H1 (cell line): ENCODE measurements at regions of chr1 and their contacts with region 1.

Region 1: DNA sequence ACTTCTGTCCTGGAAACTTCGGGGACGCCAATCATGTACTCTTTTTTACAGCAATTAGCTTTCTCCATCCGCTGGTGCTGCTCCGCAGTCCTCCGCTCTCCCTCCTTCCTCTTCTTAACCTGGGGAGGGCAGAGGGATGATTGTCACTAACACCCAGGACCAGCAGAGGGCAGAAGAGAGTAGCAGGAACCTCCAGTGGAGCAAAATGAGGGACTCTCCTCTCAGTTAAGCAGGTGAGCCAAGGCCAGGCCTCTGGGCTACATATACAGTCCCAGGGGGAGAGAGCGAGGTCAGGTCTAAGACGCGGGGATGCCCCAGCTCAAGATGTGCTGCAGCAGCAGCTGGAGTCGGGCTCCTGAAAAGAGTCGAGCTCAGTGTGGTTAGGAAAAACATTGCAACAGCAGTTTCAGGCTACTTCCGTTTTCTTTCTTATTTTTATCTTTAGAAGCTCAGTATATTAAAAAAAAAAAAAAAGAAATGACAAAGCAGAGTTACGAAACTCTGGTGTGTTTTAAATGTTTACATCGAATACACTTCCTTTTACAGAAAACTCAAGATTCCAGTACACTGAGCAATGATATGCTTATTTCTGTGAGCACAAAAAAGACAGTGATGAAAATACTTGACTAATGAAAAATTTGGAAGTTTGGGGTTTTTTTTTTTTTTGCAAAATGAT is 25.7 kb upstream of the NLRP3 start:
- DNase-seq: peak; percentile 63 to 93
- H3K4me3 ChIP-seq: no peak overlapping the region
- H3K27ac ChIP-seq: no peak overlapping the region
- H3K4me1 ChIP-seq: peaks cover 0 to 7% (median 6%) of the 10 kb centered on the region in 4 experiments
- H3K27me3 ChIP-seq: peaks cover 0 to 7% (median 2%) of the 10 kb centered on the region in 4 experiments; a peak in 3 of 7 replicates
- CTCF ChIP-seq: peak; percentile 74 to 94 (median 87)
- EP300 ChIP-seq: 0 out of 3 replicates have a peak, but pooled peaks of 1 of the 2 experiments have one; percentile 66
- POLR2A ChIP-seq: no peak
- RAD21 ChIP-seq: peak; percentile 67 to 74; a peak in 3 of 4 replicates

Region 2: GRCh38 chr1:247373721-247374141 is 16.5 kb before region 1 on chr1:
- CTCF ChIA-PET with region 1: interaction called, 33 read pairs
- POLR2A ChIA-PET with region 1: interaction called, 10 read pairs
- DNase-seq: peak in 1 of 2 experiments; percentile 89
- H3K4me3 ChIP-seq: peak overlapping the region in 1 of 4 experiments; percentile 43; a peak in 1 of 8 replicates
- H3K27ac ChIP-seq: no peak overlapping the region
- H3K4me1 ChIP-seq: peaks cover 13 to 35% (median 23%) of the 10 kb centered on the region in 4 experiments; a peak in 6 of 7 replicates
- H3K27me3 ChIP-seq: no peaks in the 10 kb centered on the region
- CTCF ChIP-seq: peak; percentile 56 to 74 (median 63)
- EP300 ChIP-seq: 0 out of 3 replicates have a peak, but pooled peaks of 1 of the 2 experiments have one; percentile 7
- POLR2A ChIP-seq: no peak
- RAD21 ChIP-seq: peak; percentile 29 to 51

Region 3: GRCh38 chr1:247401310-247402119 is 11.3 kb after region 1 on chr1:
- CTCF ChIA-PET with region 1: interaction called, 43 read pairs
- POLR2A ChIA-PET with region 1: no interaction called
- DNase-seq: no peak
- H3K4me3 ChIP-seq: no peak overlapping the region
- H3K27ac ChIP-seq: no peak overlapping the region
- H3K4me1 ChIP-seq: no peaks in the 10 kb centered on the region
- H3K27me3 ChIP-seq: no peaks in the 10 kb centered on the region
- CTCF ChIP-seq: no peak
- EP300 ChIP-seq: no peak
- POLR2A ChIP-seq: no peak
- RAD21 ChIP-seq: no peak

Region 4: DNA sequence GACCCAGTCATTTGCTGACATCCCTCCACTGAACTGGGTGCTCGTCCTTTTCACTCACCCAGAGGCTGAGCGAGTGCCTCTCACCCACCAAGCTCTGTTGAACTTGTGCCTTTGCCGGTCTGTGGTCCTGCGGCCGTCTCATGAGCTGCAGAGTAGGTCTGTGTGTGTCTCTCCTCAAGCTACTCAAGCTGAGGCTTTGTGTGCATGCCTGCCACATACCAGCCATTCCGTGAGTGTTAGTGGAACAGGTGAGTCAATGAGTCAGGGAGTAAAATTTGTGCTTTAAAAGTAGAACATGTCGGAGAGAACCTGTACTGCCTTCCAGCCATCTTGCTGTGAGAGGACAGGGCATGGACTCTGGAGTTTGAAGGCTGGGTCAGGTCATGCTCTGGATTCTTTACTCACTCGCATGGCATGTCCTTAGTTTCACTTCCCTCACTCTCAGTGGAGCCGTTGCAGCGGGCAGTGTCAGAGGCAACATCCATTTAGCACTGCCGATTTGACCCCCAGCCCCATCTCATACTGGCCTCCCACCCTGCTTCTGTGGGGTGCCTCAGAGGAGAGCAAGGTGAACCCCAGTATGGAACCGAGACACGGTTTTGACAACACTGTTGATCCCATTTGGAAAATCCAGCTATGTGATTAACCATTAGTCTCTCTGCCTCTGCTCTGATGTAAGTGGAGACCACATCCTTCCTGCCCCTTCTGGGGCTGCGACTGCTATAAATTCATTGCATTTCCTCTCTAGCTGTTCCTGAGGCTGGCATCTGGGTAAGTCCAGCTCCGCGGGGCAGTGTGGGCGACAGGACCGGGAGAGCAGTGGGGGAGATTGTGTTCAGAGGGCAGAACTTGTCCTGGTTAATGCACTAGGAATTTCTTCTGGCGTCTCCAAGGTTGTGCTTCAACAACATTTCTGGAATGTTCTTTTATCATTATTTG is 25.4 kb after region 1 on chr1 and contains the start of gene NLRP3:
- CTCF ChIA-PET with region 1: interaction called, 12 read pairs
- POLR2A ChIA-PET with region 1: no interaction called
- DNase-seq: no peak
- H3K4me3 ChIP-seq: no peak within 1 kb of the TSS
- H3K27ac ChIP-seq: no peak within 1 kb of the TSS
- H3K4me1 ChIP-seq: no peaks in the 10 kb centered on the region
- H3K27me3 ChIP-seq: no peaks in the 10 kb centered on the region
- CTCF ChIP-seq: no peak
- EP300 ChIP-seq: no peak
- POLR2A ChIP-seq: no peak
- RAD21 ChIP-seq: no peak
- total RNA-seq, gene NLRP3: 0.19 and 0.23 TPM in 2 replicates

Region 5: DNA sequence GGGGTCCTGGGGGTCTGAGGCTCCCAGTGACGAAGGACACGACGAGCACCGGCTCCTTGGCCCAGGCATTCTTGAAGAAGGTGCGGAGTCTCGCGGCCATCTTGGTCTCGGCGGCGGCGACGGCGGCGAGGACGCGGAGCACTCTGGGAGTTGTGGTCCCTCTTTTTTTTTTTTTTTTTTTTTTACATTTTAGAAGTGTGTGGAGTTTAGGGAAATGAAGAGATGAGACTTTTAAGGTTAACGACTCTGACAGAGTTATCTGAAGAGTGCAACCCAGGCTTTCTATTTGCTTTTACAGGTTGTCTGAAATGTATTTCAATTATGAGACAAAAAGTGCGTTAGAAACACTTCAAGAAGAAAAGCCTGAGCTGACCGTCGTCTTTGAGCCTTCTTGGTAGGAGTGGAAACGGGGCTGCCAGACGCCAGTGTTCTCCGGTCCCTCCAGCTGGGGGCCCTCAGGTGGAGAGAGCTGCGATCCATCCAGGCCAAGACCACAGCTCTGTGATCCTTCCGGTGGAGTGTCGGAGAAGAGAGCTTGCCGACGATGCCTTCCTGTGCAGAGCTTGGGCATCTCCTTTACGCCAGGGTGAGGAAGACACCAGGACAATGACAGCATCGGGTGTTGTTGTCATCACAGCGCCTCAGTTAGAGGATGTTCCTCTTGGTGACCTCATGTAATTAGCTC is 58.0 kb after region 1 on chr1:
- CTCF ChIA-PET with region 1: interaction called, 11 read pairs
- POLR2A ChIA-PET with region 1: interaction called, 5 read pairs
- DNase-seq: peak; percentile 23 to 71
- H3K4me3 ChIP-seq: peak overlapping the region; percentile 27 to 58 (median 37)
- H3K27ac ChIP-seq: no peak overlapping the region
- H3K4me1 ChIP-seq: peaks cover 0 to 4% (median 1%) of the 10 kb centered on the region in 4 experiments; a peak in 3 of 7 replicates
- H3K27me3 ChIP-seq: no peaks in the 10 kb centered on the region
- CTCF ChIP-seq: peak; percentile 2 to 37 (median 21); a peak in 3 of 4 replicates
- EP300 ChIP-seq: peak in 1 of 2 experiments; percentile 45; a peak in 1 of 3 replicates
- POLR2A ChIP-seq: peak in 1 of 2 experiments; percentile 69; a peak in 1 of 3 replicates
- RAD21 ChIP-seq: peak; percentile 25 to 38; a peak in 2 of 4 replicates

Region 6: DNA sequence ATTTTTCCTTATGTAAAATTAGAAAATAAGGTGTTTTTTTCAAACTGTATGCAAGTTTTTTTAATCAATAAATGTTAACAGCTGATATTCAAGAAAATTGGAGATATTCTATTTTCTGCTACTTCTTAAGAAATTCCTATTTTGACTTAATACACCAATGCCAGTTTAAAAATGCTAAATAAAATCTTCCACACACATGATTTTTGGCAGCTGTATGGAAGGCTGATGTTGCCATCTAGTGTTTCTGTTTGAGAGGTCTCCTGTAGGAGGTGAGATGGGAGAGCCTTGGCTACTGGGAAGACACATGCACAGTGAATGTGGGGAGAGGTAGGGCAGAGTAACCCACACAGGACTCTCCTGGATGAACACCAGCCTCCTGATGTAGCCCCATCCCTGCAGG is 96.8 kb after region 1 on chr1:
- CTCF ChIA-PET with region 1: interaction called, 53 read pairs
- POLR2A ChIA-PET with region 1: no interaction called
- DNase-seq: peak in 1 of 2 experiments; percentile 48
- H3K4me3 ChIP-seq: no peak overlapping the region
- H3K27ac ChIP-seq: no peak overlapping the region
- H3K4me1 ChIP-seq: no peaks in the 10 kb centered on the region
- H3K27me3 ChIP-seq: no peaks in the 10 kb centered on the region
- CTCF ChIP-seq: peak in 2 of 3 experiments; percentile 63 to 70; a peak in 3 of 4 replicates
- EP300 ChIP-seq: no peak
- POLR2A ChIP-seq: no peak
- RAD21 ChIP-seq: peak; percentile 91 to 92